A673 (cell line): ENCODE measurements at regions of chr1 and their contacts with region 1.

Region 1: DNA sequence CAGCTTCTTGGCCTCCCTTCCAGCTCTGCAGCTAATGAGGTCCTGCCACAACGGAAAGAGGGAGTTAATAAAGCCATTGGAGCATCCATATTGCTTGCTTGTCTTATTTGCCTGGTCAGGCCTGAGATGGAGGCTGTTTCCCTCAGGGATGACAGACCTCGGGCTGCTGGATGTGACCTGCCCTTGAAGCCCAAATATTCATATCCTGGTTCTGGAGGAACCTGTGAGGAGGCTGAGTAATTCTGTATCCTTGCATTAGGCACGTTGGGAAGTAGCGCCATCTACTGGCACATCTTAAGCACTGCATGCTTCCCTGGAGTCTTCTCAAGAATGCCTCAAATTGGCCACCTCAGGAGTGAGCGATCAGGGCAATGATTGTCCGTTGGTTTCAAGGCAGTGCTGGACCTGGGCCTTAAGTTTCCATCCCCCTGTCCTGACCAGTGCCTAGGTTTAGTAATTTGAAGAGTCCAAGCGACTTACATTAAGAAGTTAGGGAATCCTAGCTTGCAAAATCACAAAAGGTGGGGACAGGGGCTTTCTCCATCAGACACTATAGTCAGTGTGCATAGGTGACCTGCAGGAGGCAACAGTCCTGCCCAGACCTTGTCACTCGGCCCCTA is 13.8 kb upstream of the NASP start:
- DNase-seq: peak; percentile 79
- H3K4me3 ChIP-seq: no peak overlapping the region
- H3K27ac ChIP-seq: no peak overlapping the region
- H3K4me1 ChIP-seq: no peaks in the 10 kb centered on the region
- H3K27me3 ChIP-seq: no peaks in the 10 kb centered on the region
- CTCF ChIP-seq: peak; percentile 98

Region 2: GRCh38 chr1:45359882-45360513 is 210.1 kb before region 1 on chr1:
- CTCF ChIA-PET with region 1: no interaction called
- POLR2A ChIA-PET with region 1: no interaction called
- intact Hi-C with region 1: loop called (anchors 5 kb)
- DNase-seq: peak; percentile 72
- H3K4me3 ChIP-seq: no peak overlapping the region
- H3K27ac ChIP-seq: no peak overlapping the region
- H3K4me1 ChIP-seq: no peaks in the 10 kb centered on the region
- H3K27me3 ChIP-seq: no peaks in the 10 kb centered on the region
- CTCF ChIP-seq: peak; percentile 77

Region 3: GRCh38 chr1:45512641-45513054 is 57.4 kb before region 1 on chr1:
- CTCF ChIA-PET with region 1: no interaction called
- POLR2A ChIA-PET with region 1: no interaction called
- intact Hi-C with region 1: loop called (anchors 1 kb)
- DNase-seq: peak; percentile 63
- H3K4me3 ChIP-seq: no peak overlapping the region
- H3K27ac ChIP-seq: no peak overlapping the region
- H3K4me1 ChIP-seq: peaks cover 12% of the 10 kb centered on the region
- H3K27me3 ChIP-seq: no peaks in the 10 kb centered on the region
- CTCF ChIP-seq: peak; percentile 78